Pancreas (tissue), 10 donors: ENCODE measurements at regions of chr15 and their contacts with region 1.

Region 1: DNA sequence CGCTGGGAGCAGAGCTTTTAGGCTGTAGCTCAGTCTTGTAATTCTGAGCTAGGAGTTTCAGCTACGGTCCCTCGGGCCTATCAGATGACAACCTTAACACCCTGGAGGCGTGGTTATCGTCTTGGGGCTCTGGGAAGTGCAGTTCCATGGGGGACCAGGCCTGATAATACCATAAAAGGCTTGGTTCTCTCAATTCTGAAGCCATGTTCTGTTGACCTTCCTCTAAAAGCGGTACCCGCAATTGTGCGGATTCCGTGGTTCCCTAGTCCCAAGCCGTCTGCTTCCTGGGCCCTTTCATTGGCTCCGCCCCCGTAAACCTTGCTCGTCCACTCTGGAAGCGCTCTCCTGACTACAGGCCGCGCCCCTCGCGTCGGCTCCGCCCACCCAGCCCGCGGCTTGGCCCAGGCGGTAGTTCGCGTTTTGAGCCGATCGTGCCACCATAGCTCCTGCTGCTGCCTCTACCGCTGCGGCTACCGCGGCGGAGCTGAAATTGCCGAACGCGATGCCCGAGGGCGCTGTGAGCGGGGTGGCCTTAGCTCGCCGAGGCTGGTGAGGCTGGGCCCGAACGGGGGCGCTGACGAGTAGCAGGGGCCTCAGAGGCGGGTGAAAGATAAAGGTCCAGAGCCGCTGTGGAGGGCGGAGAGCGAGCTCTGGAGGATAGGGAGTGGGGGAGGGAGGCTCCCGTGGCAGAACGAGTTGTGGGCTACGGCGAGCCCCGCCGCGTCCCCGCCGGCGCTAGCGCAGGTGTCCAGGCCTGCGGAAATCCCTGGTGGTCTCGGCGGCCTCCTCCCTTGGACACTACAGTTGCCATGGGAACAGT is at the start of gene MAPKBP1:
- DNase-seq: peak; percentile 96 to 99 (median 98)
- ATAC-seq: peak; percentile 94 to 98 (median 96)
- H3K4me3 ChIP-seq: peak within 1 kb of the TSS; percentile 41 to 89 (median 73)
- H3K27ac ChIP-seq: peak within 1 kb of the TSS; percentile 53 to 77 (median 65)
- H3K4me1 ChIP-seq: peaks cover 0 to 10% (median 6%) of the 10 kb centered on the region in 3 donors
- H3K27me3 ChIP-seq: no peaks in the 10 kb centered on the region
- CTCF ChIP-seq: peak; percentile 28 to 43 (median 34)
- total RNA-seq, gene MAPKBP1: 5.3 to 12.0 (median 7.2) TPM

Region 2: DNA sequence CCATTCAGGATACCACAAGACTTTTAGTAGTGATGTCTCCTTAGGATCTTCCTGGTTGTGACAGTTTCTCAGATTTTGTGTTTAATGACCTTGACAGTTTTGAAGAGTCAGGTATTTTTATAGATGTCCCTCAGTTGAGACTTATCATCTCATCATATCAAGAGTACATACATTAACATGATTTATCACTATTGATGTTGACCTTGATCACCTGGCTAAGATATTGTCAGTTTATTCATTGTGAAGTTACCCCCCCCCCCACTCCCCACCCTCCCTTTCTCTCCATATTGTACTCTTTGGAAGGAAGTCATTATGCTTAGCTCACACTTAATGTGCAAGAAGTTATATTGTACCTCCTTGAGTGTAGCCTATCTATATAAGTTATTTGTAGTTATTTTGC is 71.2 kb before region 1 on chr15:
- intact Hi-C with region 1: no loop called
- DNase-seq: no peak
- ATAC-seq: no peak
- H3K4me3 ChIP-seq: no peak overlapping the region
- H3K27ac ChIP-seq: no peak overlapping the region
- H3K4me1 ChIP-seq: no peaks in the 10 kb centered on the region
- H3K27me3 ChIP-seq: no peaks in the 10 kb centered on the region
- CTCF ChIP-seq: no peak

Region 3: DNA sequence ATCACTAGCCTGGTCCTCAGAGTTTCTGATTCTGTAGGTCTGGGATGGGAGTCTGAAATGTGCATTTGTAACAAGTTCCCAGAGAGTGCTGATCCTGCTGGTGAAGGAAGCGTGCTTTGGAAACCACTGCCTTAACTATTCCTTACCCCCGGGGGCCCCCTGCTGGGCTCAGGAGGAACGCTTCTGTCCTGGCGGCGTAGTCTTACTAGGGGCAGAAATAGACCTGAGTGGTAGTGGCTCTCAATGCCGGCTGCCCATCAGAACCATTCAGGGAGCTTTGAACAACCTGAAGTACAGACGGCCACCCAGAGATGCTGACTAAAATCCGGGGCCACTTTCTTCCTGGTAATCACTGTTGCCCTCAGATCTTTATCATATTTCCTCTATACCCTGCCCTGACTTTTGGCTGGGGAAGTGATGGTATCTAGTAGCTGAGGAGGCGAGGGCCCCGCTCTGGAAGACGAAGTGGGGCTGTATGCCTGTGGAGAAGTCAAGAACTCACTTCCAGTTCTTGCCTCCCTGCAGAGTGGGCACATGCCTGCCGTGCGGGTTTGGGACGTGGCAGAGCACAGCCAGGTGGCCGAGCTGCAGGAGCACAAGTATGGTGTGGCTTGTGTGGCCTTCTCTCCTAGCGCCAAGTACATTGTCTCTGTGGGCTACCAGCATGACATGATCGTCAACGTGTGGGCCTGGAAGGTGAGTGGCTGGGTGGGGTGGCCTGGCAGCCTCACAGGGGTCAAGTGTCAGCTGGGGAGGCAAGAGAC is 37.3 kb after region 1 on chr15:
- intact Hi-C with region 1: loop called in 1 of 3 experiments (anchors 5 kb)
- DNase-seq: peak; percentile 71 to 90 (median 81)
- ATAC-seq: peak; percentile 90 to 99 (median 98)
- H3K4me3 ChIP-seq: no peak overlapping the region
- H3K27ac ChIP-seq: no peak overlapping the region
- H3K4me1 ChIP-seq: no peaks in the 10 kb centered on the region
- H3K27me3 ChIP-seq: no peaks in the 10 kb centered on the region
- CTCF ChIP-seq: peak; percentile 72 to 83 (median 80)

Region 4: DNA sequence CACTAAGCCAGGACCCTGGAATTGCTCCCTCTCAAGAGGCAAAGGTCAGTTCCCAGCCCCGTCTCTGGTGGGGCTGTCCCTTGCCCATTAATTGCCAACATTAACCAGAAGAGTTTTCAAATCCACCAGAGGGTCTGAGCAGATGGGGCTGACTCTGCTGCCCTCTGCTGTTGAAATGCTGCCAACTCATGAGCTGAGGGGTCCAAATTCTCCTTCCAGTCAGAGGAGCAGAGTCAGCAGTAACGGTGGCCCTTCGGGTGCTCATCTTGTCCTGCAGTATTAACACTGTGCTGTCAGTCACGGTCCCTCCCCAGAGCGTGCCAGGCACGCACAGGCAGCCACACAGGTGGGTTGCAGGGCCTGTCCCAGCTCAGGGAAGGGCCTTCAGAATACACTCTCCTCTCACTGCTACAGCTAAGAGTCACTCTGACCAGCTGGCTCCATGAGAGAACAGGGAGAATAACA is 130.3 kb after region 1 on chr15:
- intact Hi-C with region 1: loop called in 1 of 3 experiments (anchors 10 kb)
- DNase-seq: peak in 3 of 6 donors; percentile 49 to 65 (median 57)
- ATAC-seq: peak; percentile 65 to 82 (median 81)
- H3K4me3 ChIP-seq: no peak overlapping the region
- H3K27ac ChIP-seq: no peak overlapping the region
- H3K4me1 ChIP-seq: peaks cover 0 to 5% (median 0%) of the 10 kb centered on the region in 3 donors
- H3K27me3 ChIP-seq: no peaks in the 10 kb centered on the region
- CTCF ChIP-seq: peak; percentile 54 to 79 (median 76)

Region 5: GRCh38 chr15:42130246-42130986 is 356.1 kb after region 1 on chr15:
- intact Hi-C with region 1: no loop called
- DNase-seq: no peak
- ATAC-seq: no peak
- H3K4me3 ChIP-seq: no peak overlapping the region
- H3K27ac ChIP-seq: no peak overlapping the region
- H3K4me1 ChIP-seq: no peaks in the 10 kb centered on the region
- H3K27me3 ChIP-seq: no peaks in the 10 kb centered on the region
- CTCF ChIP-seq: no peak